Activated CD4-positive, alpha-beta memory T cell treated with anti-CD3 and anti-CD28 coated beads for 36 hours (primary cell): ENCODE measurements at regions of chr1 and their contacts with region 1.

Region 1: DNA sequence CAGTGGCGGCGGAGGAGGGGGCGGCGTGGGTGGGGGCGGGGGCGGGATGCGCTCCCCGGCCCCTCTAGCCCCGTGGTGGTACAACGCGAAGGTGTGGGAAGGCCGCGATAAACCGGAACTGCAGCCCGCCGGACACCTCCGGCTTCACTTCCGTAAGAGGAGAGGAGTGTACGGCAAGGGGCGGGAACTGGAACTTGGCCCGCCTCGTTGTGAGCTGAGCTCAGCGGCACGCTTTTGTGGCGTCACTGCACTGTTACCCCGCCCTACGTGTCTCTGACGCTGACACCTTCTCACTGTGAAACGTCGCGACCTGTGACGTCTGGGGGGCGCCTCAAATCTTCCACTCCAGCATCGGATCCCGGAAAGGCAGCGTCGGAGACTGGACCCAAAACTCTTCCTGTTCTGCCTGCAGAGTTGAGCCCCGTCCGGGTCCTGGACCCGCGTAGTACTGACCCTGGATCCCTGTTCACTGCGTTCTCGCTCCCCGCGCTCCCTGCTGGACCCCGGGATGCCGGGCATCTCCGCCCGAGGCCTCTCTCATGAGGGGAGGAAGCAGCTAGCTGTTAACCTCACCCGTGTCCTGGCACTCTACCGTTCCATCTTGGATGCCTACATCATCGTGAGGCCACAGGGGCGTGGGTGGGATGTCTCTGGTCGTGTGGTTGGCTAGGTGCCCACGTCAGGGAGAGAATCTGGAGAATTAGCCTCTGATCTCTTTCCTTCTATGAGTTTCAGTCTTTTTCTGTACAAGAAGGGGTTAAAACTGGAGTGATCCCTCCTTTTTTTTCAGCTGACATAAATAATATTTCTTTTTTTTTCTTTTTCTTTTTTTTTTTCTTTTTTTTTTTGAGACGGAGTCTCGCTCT is at the start of gene ISG20L2:
- DNase-seq: peak; percentile 98
- H3K4me3 Mint-ChIP-seq: no peak within 1 kb of the TSS
- H3K27ac Mint-ChIP-seq: peak within 1 kb of the TSS; percentile 99
- H3K4me1 Mint-ChIP-seq: peaks cover 23% of the 10 kb centered on the region
- H3K27me3 Mint-ChIP-seq: no peaks in the 10 kb centered on the region
- total RNA-seq, gene ISG20L2: 35.6 to 36.8 TPM

Region 2: GRCh38 chr1:156689035-156689952 is 39.5 kb before region 1 on chr1:
- CTCF ChIA-PET with region 1: interaction called, 1,179 read pairs
- POLR2A ChIA-PET with region 1: interaction called, 13 read pairs
- intact Hi-C with region 1: loop called (anchors 1 kb)
- DNase-seq: peak; percentile 83
- H3K4me3 Mint-ChIP-seq: no peak overlapping the region
- H3K27ac Mint-ChIP-seq: no peak overlapping the region
- H3K4me1 Mint-ChIP-seq: peaks cover 16% of the 10 kb centered on the region
- H3K27me3 Mint-ChIP-seq: peaks cover 55% of the 10 kb centered on the region

Region 3: GRCh38 chr1:156751758-156752757 is 23.2 kb after region 1 on chr1:
- CTCF ChIA-PET with region 1: interaction called, 75 read pairs
- POLR2A ChIA-PET with region 1: interaction called, 36 read pairs
- intact Hi-C with region 1: loop called (anchors 1 kb)
- DNase-seq: peak; percentile 99
- H3K4me3 Mint-ChIP-seq: peak overlapping the region; percentile 93
- H3K27ac Mint-ChIP-seq: peak overlapping the region; percentile 93
- H3K4me1 Mint-ChIP-seq: peaks cover 27% of the 10 kb centered on the region
- H3K27me3 Mint-ChIP-seq: no peaks in the 10 kb centered on the region

Region 4: DNA sequence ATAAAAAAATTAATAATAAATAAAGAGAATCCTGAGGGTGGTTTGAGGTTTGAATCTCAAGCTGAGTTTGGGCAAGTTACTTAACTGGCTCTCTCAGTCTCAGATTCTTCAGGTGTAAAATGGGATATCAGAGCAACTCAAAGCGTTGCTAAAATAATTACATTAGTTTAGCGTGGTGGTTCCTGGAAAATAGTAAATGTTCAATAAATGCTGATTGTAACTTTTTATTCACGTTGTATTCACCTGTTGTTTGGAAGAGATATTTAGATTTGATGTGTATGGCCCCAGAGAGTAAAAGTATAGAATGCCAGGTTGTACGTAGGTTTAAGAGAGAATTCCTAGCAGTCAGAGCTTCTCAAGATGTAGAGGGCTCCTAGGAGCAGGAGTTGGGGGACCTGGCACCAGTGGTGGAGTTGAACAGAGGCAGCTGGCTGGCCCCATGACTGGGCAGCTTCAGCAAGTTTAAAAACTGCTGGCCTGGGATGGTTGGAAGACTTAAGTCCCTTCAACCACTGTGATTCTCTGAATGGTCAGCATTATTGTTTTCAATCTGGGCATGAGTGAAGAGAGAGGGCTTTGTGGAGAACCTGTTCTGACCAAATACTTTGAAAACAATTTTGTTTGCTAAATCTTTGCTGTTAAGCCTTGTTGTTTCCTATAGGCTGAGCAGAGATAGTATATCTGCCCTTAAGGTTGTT is 60.9 kb after region 1 on chr1:
- CTCF ChIA-PET with region 1: interaction called, 20 read pairs
- POLR2A ChIA-PET with region 1: no interaction called
- intact Hi-C with region 1: no loop called
- DNase-seq: no peak
- H3K4me3 Mint-ChIP-seq: no peak overlapping the region
- H3K27ac Mint-ChIP-seq: no peak overlapping the region
- H3K4me1 Mint-ChIP-seq: no peaks in the 10 kb centered on the region
- H3K27me3 Mint-ChIP-seq: no peaks in the 10 kb centered on the region

Region 5: DNA sequence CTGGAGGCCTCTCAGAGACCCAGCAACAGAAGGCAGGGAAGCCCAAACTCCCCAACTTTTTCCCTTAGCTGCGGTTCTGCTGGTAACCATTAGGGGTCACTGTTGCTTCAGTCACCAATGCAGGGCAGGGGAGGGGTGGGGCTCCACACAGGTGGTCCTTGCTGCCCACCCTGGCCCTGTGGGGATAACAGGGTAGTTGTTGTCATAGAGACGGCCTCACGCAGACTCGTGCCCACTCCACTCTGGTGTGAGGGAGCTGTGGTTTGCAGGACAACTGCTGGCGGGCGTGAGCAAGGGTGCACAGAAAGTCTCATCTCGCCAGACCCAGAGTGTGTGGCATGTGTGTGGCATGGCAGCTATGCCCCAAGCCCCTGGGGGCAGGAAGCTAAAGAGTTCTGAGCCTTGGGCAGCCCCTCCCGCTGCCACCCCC is 110.2 kb after region 1 on chr1:
- CTCF ChIA-PET with region 1: interaction called, 24 read pairs
- POLR2A ChIA-PET with region 1: no interaction called
- intact Hi-C with region 1: no loop called
- DNase-seq: peak; percentile 59
- H3K4me3 Mint-ChIP-seq: no peak overlapping the region
- H3K27ac Mint-ChIP-seq: no peak overlapping the region
- H3K4me1 Mint-ChIP-seq: peaks cover 42% of the 10 kb centered on the region
- H3K27me3 Mint-ChIP-seq: peaks cover 51% of the 10 kb centered on the region

Region 6: DNA sequence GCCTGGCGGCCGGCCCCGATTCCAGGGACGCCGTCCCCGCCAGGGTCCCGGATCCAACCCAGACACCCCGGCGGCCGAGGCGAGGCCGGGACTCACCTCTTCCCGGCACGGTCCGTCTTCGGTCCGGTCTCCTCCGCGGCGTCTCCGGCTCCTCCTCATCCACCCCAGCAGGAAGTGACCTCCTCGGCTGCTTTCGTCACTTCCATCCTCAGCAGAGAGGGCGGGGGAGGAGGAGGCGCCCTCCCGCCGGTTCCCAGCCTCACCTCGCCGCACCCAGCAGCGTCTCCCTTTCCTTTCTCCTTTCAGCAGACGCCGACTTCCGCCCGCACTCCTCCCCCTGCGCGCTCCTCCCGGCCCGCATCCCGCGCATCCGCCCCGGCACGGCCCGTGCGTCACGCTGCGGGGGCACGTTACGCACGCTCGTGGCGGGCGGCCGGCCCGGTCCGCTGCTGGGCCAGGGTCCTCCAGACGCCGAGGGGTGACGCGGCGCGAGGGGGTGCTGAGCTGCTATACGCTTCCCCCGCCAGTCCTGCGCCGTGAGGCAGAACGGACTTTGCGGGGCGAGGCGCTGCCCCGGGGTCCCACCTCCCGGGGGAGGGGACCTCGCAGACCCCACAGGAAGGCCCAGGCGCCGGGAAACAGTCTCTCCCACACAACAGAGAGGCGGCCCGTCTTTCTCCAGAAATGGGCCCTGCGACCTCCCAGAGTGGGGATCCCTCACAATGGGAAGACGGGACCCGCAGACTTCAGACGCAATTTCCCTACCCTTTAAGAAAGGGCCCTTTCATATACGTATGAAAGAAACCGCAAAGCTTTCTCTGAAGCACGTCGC is 409.6 kb after region 1 on chr1 and contains the start of gene ETV3:
- CTCF ChIA-PET with region 1: no interaction called
- POLR2A ChIA-PET with region 1: no interaction called
- intact Hi-C with region 1: loop called (anchors 2 kb)
- DNase-seq: peak; percentile 94
- H3K4me3 Mint-ChIP-seq: peak within 1 kb of the TSS; percentile 98
- H3K27ac Mint-ChIP-seq: peak within 1 kb of the TSS; percentile 88
- H3K4me1 Mint-ChIP-seq: peaks cover 73% of the 10 kb centered on the region
- H3K27me3 Mint-ChIP-seq: no peaks in the 10 kb centered on the region
- total RNA-seq, gene ETV3: 30.9 to 32.4 TPM